T-cell (primary cell): ENCODE measurements at regions of chr3 and their contacts with region 1.

Region 1: GRCh38 chr3:20055020-20055775 is 15.0 kb downstream of the KAT2B start:
- DNase-seq: peak in 2 of 35 experiments; percentile 11 to 40
- ATAC-seq: peak in 3 of 4 experiments; percentile 31 to 54 (median 53)
- H3K4me3 ChIP-seq: peak overlapping the region in 1 of 2 donors; percentile 1
- H3K4me3 Mint-ChIP-seq: no peak overlapping the region
- H3K27ac ChIP-seq: peak overlapping the region; percentile 74
- H3K27ac Mint-ChIP-seq: no peak overlapping the region
- H3K4me1 ChIP-seq: peaks cover 0 to 59% of the 10 kb centered on the region in 2 experiments
- H3K4me1 Mint-ChIP-seq: peaks cover 38 to 43% (median 40%) of the 10 kb centered on the region in 3 donors
- H3K27me3 ChIP-seq: no peaks in the 10 kb centered on the region
- H3K27me3 Mint-ChIP-seq: no peaks in the 10 kb centered on the region

Region 2: DNA sequence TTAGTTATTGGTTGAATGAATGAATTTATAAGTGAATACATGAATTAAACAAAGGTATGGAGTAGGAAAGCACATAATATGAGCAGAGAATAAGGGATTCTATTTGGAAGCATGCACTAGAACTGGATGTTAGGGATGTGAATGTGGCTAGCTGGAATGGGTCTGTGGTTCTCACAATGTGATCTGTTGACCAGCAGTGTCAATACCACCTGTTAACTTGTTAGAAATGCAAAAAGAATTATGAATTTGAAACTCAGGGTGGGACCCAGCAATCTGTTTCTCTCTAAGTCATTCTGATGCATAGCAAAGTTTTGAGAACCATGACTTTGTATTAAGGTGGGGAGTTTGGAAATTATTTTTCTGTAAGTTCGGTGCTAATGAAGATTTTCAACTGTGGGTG is 1589.1 kb before region 1 on chr3:
- CTCF ChIA-PET with region 1: no interaction called
- POLR2A ChIA-PET with region 1: interaction called in 1 of 2 experiments, 10 read pairs
- DNase-seq: no peak
- ATAC-seq: no peak
- H3K4me3 ChIP-seq: no peak overlapping the region
- H3K4me3 Mint-ChIP-seq: no peak overlapping the region
- H3K27ac ChIP-seq: no peak overlapping the region
- H3K27ac Mint-ChIP-seq: no peak overlapping the region
- H3K4me1 ChIP-seq: no peaks in the 10 kb centered on the region
- H3K4me1 Mint-ChIP-seq: peaks cover 2 to 8% (median 6%) of the 10 kb centered on the region in 3 donors
- H3K27me3 ChIP-seq: no peaks in the 10 kb centered on the region
- H3K27me3 Mint-ChIP-seq: no peaks in the 10 kb centered on the region

Region 3: GRCh38 chr3:19920401-19921075 is 134.7 kb before region 1 on chr3:
- CTCF ChIA-PET with region 1: no interaction called
- POLR2A ChIA-PET with region 1: no interaction called
- DNase-seq: no peak
- ATAC-seq: no peak
- H3K4me3 ChIP-seq: no peak overlapping the region
- H3K4me3 Mint-ChIP-seq: no peak overlapping the region
- H3K27ac ChIP-seq: no peak overlapping the region
- H3K27ac Mint-ChIP-seq: no peak overlapping the region
- H3K4me1 ChIP-seq: no peaks in the 10 kb centered on the region
- H3K4me1 Mint-ChIP-seq: no peaks in the 10 kb centered on the region
- H3K27me3 ChIP-seq: no peaks in the 10 kb centered on the region
- H3K27me3 Mint-ChIP-seq: no peaks in the 10 kb centered on the region

Region 4: GRCh38 chr3:19946832-19947548 is 108.2 kb before region 1 on chr3 and contains the start of gene RAB5A:
- CTCF ChIA-PET with region 1: no interaction called
- POLR2A ChIA-PET with region 1: interaction called in 1 of 2 experiments, 13 read pairs
- DNase-seq: peak; percentile 91 to 98 (median 95)
- ATAC-seq: peak; percentile 86 to 90 (median 88)
- H3K4me3 ChIP-seq: peak within 1 kb of the TSS; percentile 78 to 98
- H3K4me3 Mint-ChIP-seq: peak within 1 kb of the TSS; percentile 95 to 100 (median 99)
- H3K27ac ChIP-seq: peak within 1 kb of the TSS; percentile 96
- H3K27ac Mint-ChIP-seq: peak within 1 kb of the TSS; percentile 97 to 99
- H3K4me1 ChIP-seq: peaks cover 13 to 23% of the 10 kb centered on the region in 2 experiments
- H3K4me1 Mint-ChIP-seq: peaks cover 48 to 56% (median 51%) of the 10 kb centered on the region in 3 donors
- H3K27me3 ChIP-seq: no peaks in the 10 kb centered on the region
- H3K27me3 Mint-ChIP-seq: no peaks in the 10 kb centered on the region
- total RNA-seq, gene RAB5A: 41.3 to 91.0 (median 54.7) TPM

Region 5: DNA sequence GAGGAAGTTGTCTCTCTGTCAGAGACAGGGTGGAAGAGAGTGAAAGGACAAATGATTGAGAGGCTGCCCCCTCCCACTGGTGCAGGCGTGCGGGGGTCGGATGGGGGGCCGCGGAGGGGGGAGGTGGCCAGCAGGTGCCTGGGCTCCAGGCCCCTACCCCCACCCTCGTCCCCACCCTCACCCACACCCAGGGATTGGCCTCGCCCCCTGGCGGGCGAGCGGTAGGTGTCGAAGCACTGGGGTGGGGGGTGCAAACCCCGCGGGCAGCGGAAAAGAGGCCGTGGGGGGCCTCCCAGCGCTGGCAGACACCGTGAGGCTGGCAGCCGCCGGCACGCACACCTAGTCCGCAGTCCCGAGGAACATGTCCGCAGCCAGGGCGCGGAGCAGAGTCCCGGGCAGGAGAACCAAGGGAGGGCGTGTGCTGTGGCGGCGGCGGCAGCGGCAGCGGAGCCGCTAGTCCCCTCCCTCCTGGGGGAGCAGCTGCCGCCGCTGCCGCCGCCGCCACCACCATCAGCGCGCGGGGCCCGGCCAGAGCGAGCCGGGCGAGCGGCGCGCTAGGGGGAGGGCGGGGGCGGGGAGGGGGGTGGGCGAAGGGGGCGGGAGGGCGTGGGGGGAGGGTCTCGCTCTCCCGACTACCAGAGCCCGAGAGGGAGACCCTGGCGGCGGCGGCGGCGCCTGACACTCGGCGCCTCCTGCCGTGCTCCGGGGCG is 15.3 kb before region 1 on chr3 and contains the start of gene KAT2B:
- CTCF ChIA-PET with region 1: interaction called in 1 of 2 experiments, 6 read pairs
- POLR2A ChIA-PET with region 1: interaction called, 3 to 11 read pairs
- DNase-seq: peak; percentile 68 to 90 (median 81)
- ATAC-seq: peak; percentile 76 to 80 (median 78)
- H3K4me3 ChIP-seq: peak within 1 kb of the TSS; percentile 65 to 92
- H3K4me3 Mint-ChIP-seq: peak within 1 kb of the TSS; percentile 97 to 100 (median 97)
- H3K27ac ChIP-seq: peak within 1 kb of the TSS; percentile 92
- H3K27ac Mint-ChIP-seq: peak within 1 kb of the TSS; percentile 95 to 99
- H3K4me1 ChIP-seq: peaks cover 16 to 45% of the 10 kb centered on the region in 2 experiments
- H3K4me1 Mint-ChIP-seq: peaks cover 48 to 54% (median 54%) of the 10 kb centered on the region in 3 donors
- H3K27me3 ChIP-seq: no peaks in the 10 kb centered on the region
- H3K27me3 Mint-ChIP-seq: no peaks in the 10 kb centered on the region
- total RNA-seq, gene KAT2B: 49.5 to 98.8 (median 80.8) TPM